T-cell (primary cell): ENCODE measurements at regions of chr1 and their contacts with region 1.

Region 1: GRCh38 chr1:204162231-204163074 is 3.7 kb downstream of the REN start:
- DNase-seq: peak; percentile 35 to 84 (median 71)
- ATAC-seq: peak; percentile 87 to 97 (median 90)
- H3K4me3 ChIP-seq: no peak overlapping the region
- H3K4me3 Mint-ChIP-seq: no peak overlapping the region
- H3K27ac ChIP-seq: no peak overlapping the region
- H3K27ac Mint-ChIP-seq: no peak overlapping the region
- H3K4me1 ChIP-seq: no peaks in the 10 kb centered on the region
- H3K4me1 Mint-ChIP-seq: no peaks in the 10 kb centered on the region
- H3K27me3 ChIP-seq: peaks cover 0 to 33% of the 10 kb centered on the region in 2 experiments
- H3K27me3 Mint-ChIP-seq: peaks cover 6 to 15% of the 10 kb centered on the region in 2 donors

Region 2: GRCh38 chr1:203643213-203644045 is 519.0 kb before region 1 on chr1:
- CTCF ChIA-PET with region 1: no interaction called
- POLR2A ChIA-PET with region 1: no interaction called
- DNase-seq: no peak
- ATAC-seq: no peak
- H3K4me3 ChIP-seq: no peak overlapping the region
- H3K4me3 Mint-ChIP-seq: no peak overlapping the region
- H3K27ac ChIP-seq: no peak overlapping the region
- H3K27ac Mint-ChIP-seq: peak overlapping the region; percentile 78 to 85
- H3K4me1 ChIP-seq: peaks cover 10 to 54% of the 10 kb centered on the region in 2 experiments
- H3K4me1 Mint-ChIP-seq: peaks cover 61 to 82% (median 74%) of the 10 kb centered on the region in 3 donors
- H3K27me3 ChIP-seq: no peaks in the 10 kb centered on the region
- H3K27me3 Mint-ChIP-seq: no peaks in the 10 kb centered on the region

Region 3: GRCh38 chr1:204084247-204084772 is 78.1 kb before region 1 on chr1:
- CTCF ChIA-PET with region 1: no interaction called
- POLR2A ChIA-PET with region 1: no interaction called
- DNase-seq: no peak
- ATAC-seq: no peak
- H3K4me3 ChIP-seq: no peak overlapping the region
- H3K4me3 Mint-ChIP-seq: no peak overlapping the region
- H3K27ac ChIP-seq: no peak overlapping the region
- H3K27ac Mint-ChIP-seq: no peak overlapping the region
- H3K4me1 ChIP-seq: peaks cover 0 to 21% of the 10 kb centered on the region in 2 experiments
- H3K4me1 Mint-ChIP-seq: peaks cover 0 to 22% (median 6%) of the 10 kb centered on the region in 3 donors
- H3K27me3 ChIP-seq: peaks cover 0 to 15% of the 10 kb centered on the region in 2 experiments
- H3K27me3 Mint-ChIP-seq: peaks cover 0 to 10% of the 10 kb centered on the region in 2 donors

Region 4: DNA sequence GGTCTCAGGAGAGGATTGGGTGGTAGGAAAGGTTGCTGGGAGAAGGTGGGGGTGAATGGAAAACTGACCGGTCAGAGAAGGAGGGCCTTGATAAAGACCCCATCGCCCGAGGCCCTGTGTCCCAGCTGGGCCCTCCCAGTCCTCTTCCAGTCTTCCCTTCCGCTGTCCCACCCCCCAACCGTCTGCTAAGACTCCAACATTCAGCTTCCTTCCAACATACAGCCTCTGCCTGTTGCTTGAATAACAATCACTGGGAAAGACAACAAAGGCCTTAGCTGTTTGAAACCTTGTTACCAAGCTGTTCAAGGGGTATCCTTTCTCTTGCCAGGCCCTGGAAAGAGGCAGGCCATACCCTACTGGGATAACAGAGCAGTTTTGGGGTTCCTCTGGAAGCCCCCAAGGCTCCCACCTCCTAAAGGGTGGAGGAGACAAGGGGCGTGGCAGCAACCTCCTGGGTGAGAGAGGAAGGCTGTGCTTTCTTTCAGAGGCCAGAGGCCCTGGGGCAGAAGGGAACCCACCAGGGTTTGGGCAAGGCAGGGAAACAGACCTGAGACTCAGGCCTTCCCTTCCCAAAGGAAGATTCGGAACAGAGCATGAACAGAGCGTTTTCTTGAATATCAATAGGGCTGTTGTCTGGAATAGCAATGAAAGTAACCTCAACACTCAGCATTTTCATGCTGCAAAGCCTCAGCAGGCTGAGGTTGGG is 14.9 kb before region 1 on chr1:
- CTCF ChIA-PET with region 1: no interaction called
- POLR2A ChIA-PET with region 1: no interaction called
- DNase-seq: no peak
- ATAC-seq: no peak
- H3K4me3 ChIP-seq: no peak overlapping the region
- H3K4me3 Mint-ChIP-seq: no peak overlapping the region
- H3K27ac ChIP-seq: no peak overlapping the region
- H3K27ac Mint-ChIP-seq: no peak overlapping the region
- H3K4me1 ChIP-seq: peaks cover 0 to 14% of the 10 kb centered on the region in 2 experiments
- H3K4me1 Mint-ChIP-seq: peaks cover 0 to 14% (median 8%) of the 10 kb centered on the region in 3 donors
- H3K27me3 ChIP-seq: peaks cover 0 to 18% of the 10 kb centered on the region in 2 experiments
- H3K27me3 Mint-ChIP-seq: peaks cover 0 to 6% of the 10 kb centered on the region in 2 donors

Region 5: GRCh38 chr1:204207136-204207616 is 44.7 kb after region 1 on chr1:
- CTCF ChIA-PET with region 1: interaction called, 6 to 11 read pairs
- POLR2A ChIA-PET with region 1: no interaction called
- DNase-seq: peak; percentile 21 to 80 (median 64)
- ATAC-seq: peak; percentile 81 to 95 (median 92)
- H3K4me3 ChIP-seq: peak overlapping the region in 1 of 2 donors; percentile 15
- H3K4me3 Mint-ChIP-seq: no peak overlapping the region
- H3K27ac ChIP-seq: no peak overlapping the region
- H3K27ac Mint-ChIP-seq: no peak overlapping the region
- H3K4me1 ChIP-seq: peaks cover 7 to 10% of the 10 kb centered on the region in 2 experiments
- H3K4me1 Mint-ChIP-seq: peaks cover 10 to 18% (median 14%) of the 10 kb centered on the region in 3 donors
- H3K27me3 ChIP-seq: peaks cover 0 to 34% of the 10 kb centered on the region in 2 experiments
- H3K27me3 Mint-ChIP-seq: peaks cover 34 to 48% of the 10 kb centered on the region in 2 donors

Region 6: GRCh38 chr1:204363335-204364124 is 201.1 kb after region 1 on chr1:
- CTCF ChIA-PET with region 1: interaction called, 5 to 21 read pairs
- POLR2A ChIA-PET with region 1: no interaction called
- DNase-seq: peak; percentile 50 to 90 (median 66)
- ATAC-seq: peak; percentile 85 to 92 (median 90)
- H3K4me3 ChIP-seq: peak overlapping the region; percentile 54 to 57
- H3K4me3 Mint-ChIP-seq: peak overlapping the region; percentile 42 to 83 (median 72)
- H3K27ac ChIP-seq: peak overlapping the region; percentile 20
- H3K27ac Mint-ChIP-seq: peak overlapping the region; percentile 59 to 85
- H3K4me1 ChIP-seq: peaks cover 0 to 17% of the 10 kb centered on the region in 2 experiments
- H3K4me1 Mint-ChIP-seq: peaks cover 9 to 16% (median 12%) of the 10 kb centered on the region in 3 donors
- H3K27me3 ChIP-seq: peaks cover 0 to 33% of the 10 kb centered on the region in 2 experiments
- H3K27me3 Mint-ChIP-seq: peaks cover 5 to 9% of the 10 kb centered on the region in 2 donors

Region 7: GRCh38 chr1:204411451-204412204 is 249.2 kb after region 1 on chr1 and contains the start of gene PPP1R15B:
- CTCF ChIA-PET with region 1: no interaction called
- POLR2A ChIA-PET with region 1: interaction called in 1 of 2 experiments, 19 read pairs
- DNase-seq: peak; percentile 92 to 99 (median 97)
- ATAC-seq: peak; percentile 91 to 95 (median 92)
- H3K4me3 ChIP-seq: peak within 1 kb of the TSS; percentile 96 to 100
- H3K4me3 Mint-ChIP-seq: peak within 1 kb of the TSS; percentile 98 to 99 (median 98)
- H3K27ac ChIP-seq: peak within 1 kb of the TSS; percentile 100
- H3K27ac Mint-ChIP-seq: peak within 1 kb of the TSS; percentile 99 to 100
- H3K4me1 ChIP-seq: peaks cover 4 to 9% of the 10 kb centered on the region in 2 experiments
- H3K4me1 Mint-ChIP-seq: peaks cover 10 to 24% (median 11%) of the 10 kb centered on the region in 3 donors
- H3K27me3 ChIP-seq: no peaks in the 10 kb centered on the region
- H3K27me3 Mint-ChIP-seq: no peaks in the 10 kb centered on the region
- total RNA-seq, gene PPP1R15B: 67.9 to 151 (median 70.6) TPM